IMR-90 (cell line): ENCODE measurements at regions of chr18 and their contacts with region 1.

Region 1: DNA sequence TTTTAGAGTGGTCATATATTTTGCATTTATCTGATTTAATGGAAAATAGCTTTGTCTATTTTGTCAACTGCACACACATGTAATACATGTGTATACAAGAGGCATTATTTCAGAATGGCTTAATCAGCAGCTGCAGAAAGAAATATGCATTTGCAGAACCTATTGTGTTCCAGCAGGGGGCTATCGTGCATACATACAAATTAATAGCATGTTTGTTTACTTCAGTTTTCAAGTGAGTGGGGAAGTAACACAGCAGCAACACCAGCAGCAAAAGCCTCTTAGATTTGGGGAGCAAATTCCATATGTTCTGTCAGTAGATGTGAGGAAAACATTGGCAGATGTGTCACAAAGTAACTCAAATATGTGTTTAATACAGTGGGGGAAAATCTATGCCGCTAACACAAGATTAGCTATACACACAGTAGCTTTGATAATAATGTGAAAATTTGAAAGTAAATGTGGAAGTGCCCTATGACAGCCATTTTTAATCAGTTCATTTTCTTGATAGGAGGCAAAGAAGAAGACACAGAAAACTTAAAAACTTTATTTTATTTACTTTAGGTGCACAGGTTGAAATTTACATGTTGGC is 218.1 kb downstream of the WDR7 start:
- DNase-seq: peak; percentile 73
- ATAC-seq: peak; percentile 85
- H3K4me3 ChIP-seq: no peak overlapping the region
- H3K27ac ChIP-seq: no peak overlapping the region
- H3K4me1 ChIP-seq: no peaks in the 10 kb centered on the region; the same call in 1 of the 2 replicates
- H3K27me3 ChIP-seq: no peaks in the 10 kb centered on the region
- CTCF ChIP-seq: peak; percentile 71
- POLR2A ChIP-seq: no peak
- RAD21 ChIP-seq: peak; percentile 72

Region 2: DNA sequence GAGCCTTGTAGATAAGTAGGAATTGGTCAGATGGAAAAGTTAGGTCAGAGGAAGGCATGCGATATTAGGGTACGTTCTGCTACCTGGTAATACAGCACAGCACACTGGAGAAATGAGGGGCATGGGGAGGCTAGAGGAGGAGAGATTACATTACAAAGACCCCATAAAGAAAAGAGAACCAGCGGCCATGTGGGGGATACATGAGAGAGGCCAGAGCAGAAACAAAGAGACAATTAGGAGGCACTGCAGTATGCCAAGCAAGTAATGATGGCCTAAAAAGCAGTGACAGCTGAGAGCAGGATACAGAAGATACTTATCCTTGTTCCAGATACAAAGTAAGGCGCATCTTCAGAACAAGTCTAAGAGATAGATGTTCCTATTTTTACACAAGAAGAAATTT is 270.9 kb before region 1 on chr18:
- CTCF ChIA-PET with region 1: no interaction called
- POLR2A ChIA-PET with region 1: no interaction called
- dilution Hi-C with region 1: no loop called
- in situ Hi-C with region 1: no loop called
- intact Hi-C with region 1: no loop called
- DNase-seq: no peak
- ATAC-seq: no peak
- H3K4me3 ChIP-seq: no peak overlapping the region
- H3K27ac ChIP-seq: no peak overlapping the region
- H3K4me1 ChIP-seq: no peaks in the 10 kb centered on the region
- H3K27me3 ChIP-seq: no peaks in the 10 kb centered on the region
- CTCF ChIP-seq: no peak
- POLR2A ChIP-seq: no peak
- RAD21 ChIP-seq: no peak

Region 3: DNA sequence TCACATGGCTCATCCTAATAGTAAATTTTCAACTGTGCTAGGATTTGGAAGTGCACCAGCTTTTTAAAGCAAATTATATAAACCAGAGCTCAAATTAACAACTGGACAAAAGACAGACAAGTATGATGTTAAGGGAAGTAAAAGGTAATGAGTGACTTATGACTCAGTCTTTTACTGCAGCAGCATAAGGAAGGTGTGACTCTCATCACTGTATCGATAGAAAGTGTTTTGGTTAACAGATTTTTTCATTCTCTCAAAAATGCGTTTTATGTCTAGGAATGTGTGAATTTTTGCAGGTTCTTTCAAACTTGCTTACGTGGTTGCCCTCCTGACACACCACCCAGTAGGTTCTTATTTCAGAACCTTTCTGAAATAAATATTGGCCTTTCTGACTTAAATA is 33.4 kb after region 1 on chr18:
- CTCF ChIA-PET with region 1: no interaction called
- POLR2A ChIA-PET with region 1: no interaction called
- dilution Hi-C with region 1: no loop called
- in situ Hi-C with region 1: no loop called
- intact Hi-C with region 1: no loop called
- DNase-seq: no peak
- ATAC-seq: no peak
- H3K4me3 ChIP-seq: no peak overlapping the region
- H3K27ac ChIP-seq: no peak overlapping the region
- H3K4me1 ChIP-seq: no peaks in the 10 kb centered on the region
- H3K27me3 ChIP-seq: no peaks in the 10 kb centered on the region
- CTCF ChIP-seq: no peak
- POLR2A ChIP-seq: no peak
- RAD21 ChIP-seq: no peak

Region 4: DNA sequence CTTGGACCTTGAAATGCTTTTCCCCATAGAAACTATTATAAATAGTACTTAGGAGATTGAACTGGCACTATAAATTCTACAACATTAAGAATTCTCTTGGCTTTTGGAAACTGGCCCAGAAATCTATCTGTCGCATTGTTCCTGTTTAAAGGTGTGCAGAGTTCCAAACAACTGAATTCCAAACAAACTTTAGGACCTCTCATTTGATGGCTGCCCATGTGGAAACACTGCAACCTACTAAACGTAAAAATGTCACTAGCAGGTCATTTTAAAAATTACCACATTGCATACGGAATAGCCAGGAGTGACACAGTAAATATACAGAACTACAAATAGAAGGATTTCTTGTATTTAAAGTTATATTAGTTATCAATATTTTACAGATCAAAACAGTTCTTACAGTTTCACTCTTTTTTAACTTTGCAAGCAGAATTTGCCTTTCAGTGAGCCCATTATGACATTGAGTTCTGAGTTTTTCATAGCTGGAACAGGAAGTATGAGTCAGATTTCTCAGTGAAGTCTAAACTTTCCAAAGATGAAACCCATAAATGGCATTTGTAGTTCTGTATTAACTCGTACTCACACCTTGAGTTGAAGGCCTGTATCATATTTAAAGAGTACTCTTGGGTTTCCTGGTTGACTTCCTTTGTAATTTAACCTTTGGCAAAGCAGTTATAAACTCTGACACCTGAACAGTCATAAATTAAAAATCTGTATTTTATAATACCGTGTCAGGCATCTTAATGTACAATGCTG is 135.3 kb after region 1 on chr18:
- CTCF ChIA-PET with region 1: interaction called, 5 read pairs
- POLR2A ChIA-PET with region 1: no interaction called
- dilution Hi-C with region 1: no loop called
- in situ Hi-C with region 1: no loop called
- intact Hi-C with region 1: loop called (anchors 10 kb)
- DNase-seq: peak; percentile 76
- ATAC-seq: peak; percentile 82
- H3K4me3 ChIP-seq: no peak overlapping the region
- H3K27ac ChIP-seq: no peak overlapping the region
- H3K4me1 ChIP-seq: peaks cover 6% of the 10 kb centered on the region
- H3K27me3 ChIP-seq: no peaks in the 10 kb centered on the region
- CTCF ChIP-seq: no peak
- POLR2A ChIP-seq: no peak
- RAD21 ChIP-seq: no peak

Region 5: GRCh38 chr18:57023275-57023882 is 154.1 kb after region 1 on chr18:
- CTCF ChIA-PET with region 1: no interaction called
- POLR2A ChIA-PET with region 1: no interaction called
- dilution Hi-C with region 1: no loop called
- in situ Hi-C with region 1: no loop called
- intact Hi-C with region 1: loop called (anchors 5 kb)
- DNase-seq: no peak
- ATAC-seq: no peak
- H3K4me3 ChIP-seq: no peak overlapping the region
- H3K27ac ChIP-seq: no peak overlapping the region
- H3K4me1 ChIP-seq: no peaks in the 10 kb centered on the region
- H3K27me3 ChIP-seq: no peaks in the 10 kb centered on the region
- CTCF ChIP-seq: no peak
- POLR2A ChIP-seq: no peak
- RAD21 ChIP-seq: no peak

Region 6: DNA sequence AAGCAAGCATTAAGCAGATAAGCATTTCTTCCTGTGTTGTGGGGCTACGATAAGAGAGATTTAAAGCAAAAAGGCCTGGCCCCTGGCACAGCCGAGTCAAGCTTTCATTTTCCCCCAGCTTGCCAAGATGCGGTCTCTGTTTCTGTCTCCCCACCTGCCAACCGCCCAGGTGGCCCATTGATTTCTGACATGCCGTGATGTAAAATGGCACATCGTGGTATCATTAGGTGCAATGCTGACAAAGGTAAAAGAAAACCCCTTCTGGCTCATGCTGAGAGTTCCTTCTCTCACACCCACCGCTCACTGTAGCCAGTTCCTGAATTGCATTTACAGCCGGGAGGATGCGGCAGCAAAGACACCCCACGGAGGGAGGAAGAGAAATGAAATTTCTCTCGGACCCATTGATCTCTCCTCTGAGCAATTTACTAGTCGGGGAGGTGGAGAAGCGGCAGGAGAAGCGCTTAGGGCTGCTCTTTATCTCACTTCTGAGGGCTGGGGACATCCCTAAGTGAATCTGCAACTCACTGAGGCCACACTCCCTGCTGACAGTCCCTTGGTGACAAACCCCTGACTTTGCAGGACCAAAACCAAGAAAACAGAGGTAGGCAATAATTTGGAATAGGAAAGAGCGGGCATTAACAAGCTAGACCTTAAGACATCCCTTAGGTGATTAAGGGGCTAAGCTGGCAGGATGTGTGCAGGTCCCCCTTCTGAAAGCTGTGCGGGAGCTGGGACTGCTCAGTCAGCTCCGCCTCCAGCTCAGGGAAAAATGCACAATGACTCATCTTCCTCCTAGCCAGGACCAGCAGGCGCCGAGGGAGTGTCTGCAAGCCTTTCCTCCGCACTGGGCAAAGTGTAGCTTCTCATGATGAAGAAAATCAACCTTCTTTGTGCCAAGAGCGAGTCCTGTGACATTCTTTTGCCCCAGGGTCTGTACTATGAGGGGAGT is 340.7 kb after region 1 on chr18:
- CTCF ChIA-PET with region 1: no interaction called
- POLR2A ChIA-PET with region 1: no interaction called
- dilution Hi-C with region 1: no loop called
- in situ Hi-C with region 1: no loop called
- intact Hi-C with region 1: loop called (anchors 10 kb)
- DNase-seq: peak; percentile 70
- ATAC-seq: peak; percentile 100
- H3K4me3 ChIP-seq: no peak overlapping the region
- H3K27ac ChIP-seq: no peak overlapping the region
- H3K4me1 ChIP-seq: no peaks in the 10 kb centered on the region
- H3K27me3 ChIP-seq: peaks cover 5% of the 10 kb centered on the region
- CTCF ChIP-seq: no peak
- POLR2A ChIP-seq: no peak
- RAD21 ChIP-seq: no peak

Region 7: DNA sequence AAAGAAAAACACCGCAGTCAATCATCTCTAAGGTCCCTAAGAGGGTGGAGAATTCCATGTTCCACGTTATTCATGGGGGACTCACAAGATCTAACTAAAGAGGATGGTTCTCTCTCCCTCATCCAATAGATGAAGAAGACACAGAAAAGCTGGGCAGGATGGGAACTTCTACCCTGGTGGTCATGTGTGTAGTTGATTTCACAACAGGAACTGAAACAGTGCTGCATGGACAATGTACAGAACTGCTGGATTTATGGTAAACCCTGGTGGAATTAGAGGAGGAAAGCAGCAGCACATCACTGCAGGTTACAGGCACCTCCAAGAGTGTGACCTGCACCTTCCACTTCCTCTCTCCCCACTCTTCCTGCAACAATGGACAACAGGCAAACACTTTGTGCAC is 685.9 kb after region 1 on chr18:
- CTCF ChIA-PET with region 1: no interaction called
- POLR2A ChIA-PET with region 1: no interaction called
- dilution Hi-C with region 1: no loop called
- in situ Hi-C with region 1: no loop called
- intact Hi-C with region 1: loop called (anchors 2 kb)
- DNase-seq: no peak
- ATAC-seq: no peak
- H3K4me3 ChIP-seq: no peak overlapping the region
- H3K27ac ChIP-seq: no peak overlapping the region
- H3K4me1 ChIP-seq: no peaks in the 10 kb centered on the region
- H3K27me3 ChIP-seq: no peaks in the 10 kb centered on the region
- CTCF ChIP-seq: no peak
- POLR2A ChIP-seq: no peak
- RAD21 ChIP-seq: no peak